H1 (cell line): ENCODE measurements at regions of chr3 and their contacts with region 1.

Region 1: GRCh38 chr3:51706788-51707731 is at the start of gene GRM2:
- DNase-seq: peak; percentile 53 to 90
- H3K4me3 ChIP-seq: peak within 1 kb of the TSS; percentile 49 to 79 (median 74)
- H3K27ac ChIP-seq: no peak within 1 kb of the TSS
- H3K4me1 ChIP-seq: peaks cover 0 to 34% (median 22%) of the 10 kb centered on the region in 4 experiments; a peak in 6 of 7 replicates
- H3K27me3 ChIP-seq: peaks cover 13 to 24% (median 23%) of the 10 kb centered on the region in 4 experiments; a peak in 6 of 7 replicates
- CTCF ChIP-seq: no peak; a peak in 1 of 4 replicates
- EP300 ChIP-seq: peak in 1 of 2 experiments; percentile 37; a peak in 1 of 3 replicates
- POLR2A ChIP-seq: peak in 1 of 2 experiments; percentile 46; a peak in 1 of 3 replicates
- RAD21 ChIP-seq: peak; percentile 4 to 16; a peak in 1 of 4 replicates
- total RNA-seq, gene GRM2: 3.9 and 4.3 TPM in 2 replicates

Region 2: DNA sequence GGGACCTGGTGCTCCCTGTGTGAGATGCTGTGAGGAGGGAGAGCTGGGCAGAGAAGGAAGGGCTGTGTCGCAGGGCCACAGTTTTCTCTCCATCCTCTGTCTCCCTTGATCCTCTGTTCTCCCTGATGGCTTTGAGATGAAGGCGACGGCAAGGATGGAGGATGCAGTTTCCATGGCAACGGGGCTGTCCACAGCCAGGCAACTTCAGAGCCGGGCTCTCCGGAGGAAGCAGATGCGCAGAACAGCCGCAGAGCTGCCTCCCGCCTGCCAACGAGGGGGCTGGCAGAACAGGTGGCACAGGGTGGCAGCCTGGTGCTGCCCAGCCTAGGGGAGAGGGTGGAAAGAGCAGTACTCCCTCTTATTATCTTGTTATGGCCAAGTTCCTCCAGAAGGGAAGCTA is 10.1 kb before region 1 on chr3:
- CTCF ChIA-PET with region 1: interaction called, 36 read pairs
- POLR2A ChIA-PET with region 1: no interaction called
- DNase-seq: no peak
- H3K4me3 ChIP-seq: no peak overlapping the region
- H3K27ac ChIP-seq: no peak overlapping the region
- H3K4me1 ChIP-seq: no peaks in the 10 kb centered on the region
- H3K27me3 ChIP-seq: peaks cover 0 to 1% (median 0%) of the 10 kb centered on the region in 4 experiments; a peak in 1 of 7 replicates
- CTCF ChIP-seq: no peak
- EP300 ChIP-seq: no peak
- POLR2A ChIP-seq: no peak
- RAD21 ChIP-seq: no peak

Region 3: DNA sequence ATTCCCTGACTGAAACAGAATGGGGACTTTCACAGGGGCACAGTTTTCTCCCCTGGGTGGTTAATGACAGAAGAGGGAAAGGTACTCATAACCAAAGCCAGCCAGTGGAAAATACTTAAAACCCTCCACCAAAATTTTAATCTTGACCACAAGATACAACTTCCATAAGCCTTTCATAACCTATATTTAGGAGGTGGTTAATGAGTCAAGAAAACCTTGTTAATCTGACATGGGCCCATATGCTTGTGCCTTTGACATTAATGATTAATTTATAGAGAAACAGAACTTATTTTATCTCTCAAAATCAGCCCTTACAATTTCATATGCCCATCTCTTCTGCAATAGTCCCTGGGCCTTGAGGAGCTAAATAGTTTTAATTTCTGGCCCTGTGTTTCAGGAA is 40.8 kb after region 1 on chr3:
- CTCF ChIA-PET with region 1: no interaction called
- POLR2A ChIA-PET with region 1: no interaction called
- DNase-seq: no peak
- H3K4me3 ChIP-seq: no peak overlapping the region
- H3K27ac ChIP-seq: no peak overlapping the region
- H3K4me1 ChIP-seq: no peaks in the 10 kb centered on the region
- H3K27me3 ChIP-seq: no peaks in the 10 kb centered on the region
- CTCF ChIP-seq: no peak
- EP300 ChIP-seq: no peak
- POLR2A ChIP-seq: no peak
- RAD21 ChIP-seq: no peak

Region 4: GRCh38 chr3:51777985-51778384 is 70.9 kb after region 1 on chr3:
- CTCF ChIA-PET with region 1: no interaction called
- POLR2A ChIA-PET with region 1: no interaction called
- DNase-seq: no peak
- H3K4me3 ChIP-seq: no peak overlapping the region
- H3K27ac ChIP-seq: no peak overlapping the region
- H3K4me1 ChIP-seq: peaks cover 0 to 5% (median 3%) of the 10 kb centered on the region in 4 experiments; a peak in 4 of 7 replicates
- H3K27me3 ChIP-seq: no peaks in the 10 kb centered on the region
- CTCF ChIP-seq: no peak
- EP300 ChIP-seq: no peak
- POLR2A ChIP-seq: no peak
- RAD21 ChIP-seq: no peak

Region 5: DNA sequence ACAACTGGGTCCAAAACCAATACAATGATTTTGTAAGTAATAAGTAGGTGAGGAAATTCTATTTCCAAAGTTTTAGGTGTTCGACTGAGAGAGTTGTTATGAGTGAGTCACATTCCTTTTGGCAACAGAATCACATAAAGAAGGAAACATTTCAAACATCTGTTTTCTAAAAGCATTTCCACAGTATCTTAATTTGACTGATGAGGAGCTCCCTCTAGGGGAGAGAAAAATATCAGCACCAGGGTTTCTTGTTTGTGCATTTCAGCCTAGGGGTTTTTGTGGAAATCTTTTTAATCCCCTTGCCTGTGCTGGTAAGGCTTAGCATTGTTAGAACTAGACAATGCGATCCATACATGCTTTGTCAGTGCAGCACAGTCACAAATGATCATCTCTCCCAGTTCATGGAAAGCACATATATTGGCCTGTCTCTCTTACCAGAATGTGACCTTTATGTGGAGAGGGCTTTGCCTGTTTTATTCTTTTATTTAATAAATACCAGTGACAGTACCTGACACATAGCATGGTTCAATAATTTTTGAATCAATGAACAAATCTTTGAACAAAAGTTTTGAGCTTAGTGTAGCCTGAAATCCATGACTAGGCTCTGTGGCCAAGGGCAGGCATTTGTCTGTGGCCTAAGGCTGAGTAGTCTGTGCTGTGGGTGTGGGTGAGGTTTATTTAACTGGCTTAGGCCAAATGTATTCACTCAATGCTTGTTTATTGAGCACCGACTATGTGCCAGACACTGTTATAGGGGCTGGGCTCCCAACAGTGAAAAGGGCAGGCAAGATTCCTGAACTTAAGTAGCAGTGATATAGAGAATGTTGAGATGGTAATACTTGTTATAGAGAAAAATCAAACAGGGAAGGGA is 93.1 kb after region 1 on chr3:
- CTCF ChIA-PET with region 1: interaction called, 11 read pairs
- POLR2A ChIA-PET with region 1: interaction called, 3 read pairs
- DNase-seq: peak in 1 of 2 experiments; percentile 52
- H3K4me3 ChIP-seq: no peak overlapping the region
- H3K27ac ChIP-seq: no peak overlapping the region
- H3K4me1 ChIP-seq: peaks cover 6 to 24% (median 20%) of the 10 kb centered on the region in 4 experiments; a peak in 6 of 7 replicates
- H3K27me3 ChIP-seq: no peaks in the 10 kb centered on the region
- CTCF ChIP-seq: peak in 2 of 3 experiments; percentile 73; a peak in 3 of 4 replicates
- EP300 ChIP-seq: no peak
- POLR2A ChIP-seq: no peak
- RAD21 ChIP-seq: peak; percentile 81 to 83

Region 6: DNA sequence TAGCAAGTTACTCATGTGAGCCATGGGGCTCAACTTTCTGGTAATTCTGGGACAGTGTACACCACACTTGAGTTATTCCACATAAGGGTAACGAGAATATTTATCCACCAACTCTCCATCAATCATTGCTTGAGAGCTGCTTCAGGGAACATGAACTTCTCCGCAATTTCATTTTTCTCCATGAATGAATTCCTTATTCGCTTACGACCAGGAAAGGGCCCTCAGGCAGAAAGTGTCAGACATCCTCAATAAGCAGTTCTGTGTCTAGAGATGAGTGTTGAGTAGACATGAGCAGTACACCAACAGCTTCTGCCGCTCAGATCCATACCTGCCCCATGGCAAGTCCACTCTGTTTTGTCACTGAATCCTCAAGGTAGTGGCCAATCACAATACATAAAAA is 129.5 kb after region 1 on chr3:
- CTCF ChIA-PET with region 1: no interaction called
- POLR2A ChIA-PET with region 1: no interaction called
- DNase-seq: no peak
- H3K4me3 ChIP-seq: no peak overlapping the region
- H3K27ac ChIP-seq: no peak overlapping the region
- H3K4me1 ChIP-seq: no peaks in the 10 kb centered on the region
- H3K27me3 ChIP-seq: peaks cover 0 to 1% (median 0%) of the 10 kb centered on the region in 4 experiments; a peak in 1 of 7 replicates
- CTCF ChIP-seq: no peak
- EP300 ChIP-seq: no peak
- POLR2A ChIP-seq: no peak
- RAD21 ChIP-seq: no peak